ENCODE measurements at regions of chr10 and their contacts with region 1.

Region 1: GRCh38 chr10:122435212-122435827 is 19.1 kb upstream of the ARMS2 start:
- H3K4me3 ChIP-seq: no peak overlapping the region
- H3K27ac ChIP-seq: no peak overlapping the region
- H3K4me1 ChIP-seq: no peaks in the 10 kb centered on the region
- CTCF ChIP-seq: 0 out of 2 replicates have a peak, but pooled peaks have one; percentile 15

Region 2: DNA sequence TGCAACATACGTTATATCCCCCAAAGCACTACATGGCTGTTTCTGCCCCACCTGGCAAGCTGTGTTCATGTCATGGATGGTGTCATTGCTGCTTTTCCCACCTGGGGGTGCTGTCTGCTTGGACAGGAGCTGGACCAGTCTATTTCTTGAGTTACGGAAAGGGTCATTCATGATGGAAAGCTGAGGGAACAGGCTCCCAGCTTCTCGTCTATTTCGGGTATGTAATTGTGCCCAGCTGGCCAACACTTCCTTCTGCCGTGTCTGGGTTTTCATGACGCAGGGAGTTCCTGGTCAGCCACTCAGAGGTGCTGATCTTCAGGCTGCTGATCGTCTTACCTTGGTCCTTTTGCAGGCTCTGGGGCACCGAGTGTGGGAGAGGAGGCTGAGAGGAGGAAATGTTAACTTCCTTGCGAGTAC is 155.6 kb before region 1 on chr10:
- CTCF ChIA-PET with region 1: interaction called, 28 read pairs
- POLR2A ChIA-PET with region 1: no interaction called
- H3K4me3 ChIP-seq: no peak overlapping the region
- H3K27ac ChIP-seq: no peak overlapping the region
- H3K4me1 ChIP-seq: no peaks in the 10 kb centered on the region
- CTCF ChIP-seq: peak; percentile 73

Region 3: GRCh38 chr10:122286867-122287266 is 148.5 kb before region 1 on chr10:
- CTCF ChIA-PET with region 1: interaction called, 26 read pairs
- POLR2A ChIA-PET with region 1: no interaction called
- H3K4me3 ChIP-seq: no peak overlapping the region
- H3K27ac ChIP-seq: no peak overlapping the region
- H3K4me1 ChIP-seq: no peaks in the 10 kb centered on the region
- CTCF ChIP-seq: no peak

Region 4: GRCh38 chr10:122298598-122299301 is 136.6 kb before region 1 on chr10:
- CTCF ChIA-PET with region 1: interaction called, 121 read pairs
- POLR2A ChIA-PET with region 1: no interaction called
- H3K4me3 ChIP-seq: no peak overlapping the region
- H3K27ac ChIP-seq: no peak overlapping the region; the same call in 1 of the 2 replicates
- H3K4me1 ChIP-seq: no peaks in the 10 kb centered on the region
- CTCF ChIP-seq: peak; percentile 75

Region 5: GRCh38 chr10:122307669-122308486 is 127.4 kb before region 1 on chr10:
- CTCF ChIA-PET with region 1: interaction called, 23 read pairs
- POLR2A ChIA-PET with region 1: no interaction called
- H3K4me3 ChIP-seq: no peak overlapping the region; the same call in 1 of the 2 replicates
- H3K27ac ChIP-seq: peak overlapping the region; percentile 64
- H3K4me1 ChIP-seq: peaks cover 13% of the 10 kb centered on the region
- CTCF ChIP-seq: no peak

Region 6: GRCh38 chr10:122342293-122343134 is 92.8 kb before region 1 on chr10:
- CTCF ChIA-PET with region 1: interaction called, 60 read pairs
- POLR2A ChIA-PET with region 1: no interaction called
- H3K4me3 ChIP-seq: no peak overlapping the region
- H3K27ac ChIP-seq: no peak overlapping the region
- H3K4me1 ChIP-seq: no peaks in the 10 kb centered on the region
- CTCF ChIP-seq: peak; percentile 47; the same call in 1 of the 2 replicates

Region 7: GRCh38 chr10:122495406-122496340 is 60.4 kb after region 1 on chr10:
- CTCF ChIA-PET with region 1: no interaction called
- POLR2A ChIA-PET with region 1: no interaction called
- H3K4me3 ChIP-seq: no peak overlapping the region
- H3K27ac ChIP-seq: no peak overlapping the region
- H3K4me1 ChIP-seq: peaks cover 4% of the 10 kb centered on the region; the same call in 1 of the 2 replicates
- CTCF ChIP-seq: no peak